CD4-positive, alpha-beta memory T cell (primary cell): ENCODE measurements at regions of chr3 and their contacts with region 1.

Region 1: GRCh38 chr3:120742198-120742849 is at the starts of genes GTF2E1 and RABL3:
- DNase-seq: peak; percentile 96 to 99 (median 97)
- H3K4me3 ChIP-seq: peak within 1 kb of the TSS; percentile 83 to 92
- H3K4me3 Mint-ChIP-seq: peak within 1 kb of the TSS; percentile 89 to 98 (median 96)
- H3K27ac ChIP-seq: peak within 1 kb of the TSS; percentile 98
- H3K27ac Mint-ChIP-seq: peak within 1 kb of the TSS; percentile 96 to 99 (median 98)
- H3K4me1 ChIP-seq: peaks cover 34% of the 10 kb centered on the region
- H3K4me1 Mint-ChIP-seq: peaks cover 21 to 58% (median 39%) of the 10 kb centered on the region in 4 donors
- H3K27me3 ChIP-seq: no peaks in the 10 kb centered on the region
- H3K27me3 Mint-ChIP-seq: no peaks in the 10 kb centered on the region
- total RNA-seq, gene GTF2E1: 30.0 to 30.2 TPM
- total RNA-seq, gene RABL3: 31.9 to 33.0 TPM

Region 2: DNA sequence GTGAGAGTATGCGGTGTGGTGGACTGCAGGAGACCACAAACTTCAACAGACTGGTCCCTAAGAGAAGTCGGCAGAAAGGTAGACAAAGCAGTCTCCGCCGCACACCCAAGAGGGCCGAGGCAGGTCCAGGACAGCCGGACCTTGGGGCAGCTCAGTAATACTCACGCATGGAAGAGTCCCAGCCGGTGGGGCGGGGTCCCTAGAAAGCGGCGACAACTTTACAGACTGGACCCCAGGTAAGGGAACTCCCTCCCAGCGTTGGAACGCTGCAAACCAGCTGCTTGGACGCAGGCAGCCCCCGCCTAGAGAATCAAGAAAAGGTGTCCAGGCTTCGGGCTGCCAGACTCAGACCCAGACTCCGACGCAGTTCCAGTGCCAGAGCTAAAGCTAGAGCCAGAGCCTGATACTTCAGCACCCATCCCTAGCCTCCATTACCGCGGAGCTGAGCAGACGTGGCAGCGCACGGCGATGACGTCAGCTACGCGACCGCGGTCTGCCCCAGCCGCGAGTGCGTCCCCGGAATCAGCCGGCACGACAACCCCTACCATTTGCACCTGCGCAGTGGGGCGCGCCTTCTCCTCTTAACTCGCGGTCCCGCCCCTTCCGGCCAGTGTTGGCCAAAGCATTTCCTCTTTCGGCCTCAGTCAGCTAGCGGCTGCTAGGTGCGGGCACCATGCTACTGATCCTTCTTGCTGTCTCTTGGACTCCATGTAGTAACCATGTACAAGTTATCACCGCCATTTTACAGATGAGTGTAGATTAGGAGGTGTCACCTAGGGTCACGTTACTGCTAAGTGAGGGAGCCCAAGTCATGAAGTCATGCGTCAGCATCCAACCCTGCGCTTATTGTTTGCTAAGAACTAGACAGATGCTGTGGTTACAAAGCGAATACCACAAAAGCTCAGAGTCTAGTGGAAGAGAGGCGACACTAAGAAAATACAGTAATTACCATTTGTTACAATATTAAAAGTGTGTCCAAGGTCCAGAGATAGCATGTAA is 1278.9 kb before region 1 on chr3 and contains the start of gene TMEM39A:
- CTCF ChIA-PET with region 1: no interaction called
- POLR2A ChIA-PET with region 1: no interaction called
- intact Hi-C with region 1: loop called (anchors 1 kb)
- DNase-seq: peak; percentile 98 to 99 (median 99)
- H3K4me3 ChIP-seq: peak within 1 kb of the TSS; percentile 91 to 98
- H3K4me3 Mint-ChIP-seq: peak within 1 kb of the TSS; percentile 93 to 97 (median 95)
- H3K27ac ChIP-seq: peak within 1 kb of the TSS; percentile 91
- H3K27ac Mint-ChIP-seq: peak within 1 kb of the TSS; percentile 98 to 99 (median 99)
- H3K4me1 ChIP-seq: peaks cover 33% of the 10 kb centered on the region
- H3K4me1 Mint-ChIP-seq: peaks cover 24 to 58% (median 38%) of the 10 kb centered on the region in 4 donors
- H3K27me3 ChIP-seq: no peaks in the 10 kb centered on the region
- H3K27me3 Mint-ChIP-seq: peaks cover 0 to 2% of the 10 kb centered on the region in 2 donors
- total RNA-seq, gene TMEM39A: 46.1 to 47.4 TPM

Region 3: DNA sequence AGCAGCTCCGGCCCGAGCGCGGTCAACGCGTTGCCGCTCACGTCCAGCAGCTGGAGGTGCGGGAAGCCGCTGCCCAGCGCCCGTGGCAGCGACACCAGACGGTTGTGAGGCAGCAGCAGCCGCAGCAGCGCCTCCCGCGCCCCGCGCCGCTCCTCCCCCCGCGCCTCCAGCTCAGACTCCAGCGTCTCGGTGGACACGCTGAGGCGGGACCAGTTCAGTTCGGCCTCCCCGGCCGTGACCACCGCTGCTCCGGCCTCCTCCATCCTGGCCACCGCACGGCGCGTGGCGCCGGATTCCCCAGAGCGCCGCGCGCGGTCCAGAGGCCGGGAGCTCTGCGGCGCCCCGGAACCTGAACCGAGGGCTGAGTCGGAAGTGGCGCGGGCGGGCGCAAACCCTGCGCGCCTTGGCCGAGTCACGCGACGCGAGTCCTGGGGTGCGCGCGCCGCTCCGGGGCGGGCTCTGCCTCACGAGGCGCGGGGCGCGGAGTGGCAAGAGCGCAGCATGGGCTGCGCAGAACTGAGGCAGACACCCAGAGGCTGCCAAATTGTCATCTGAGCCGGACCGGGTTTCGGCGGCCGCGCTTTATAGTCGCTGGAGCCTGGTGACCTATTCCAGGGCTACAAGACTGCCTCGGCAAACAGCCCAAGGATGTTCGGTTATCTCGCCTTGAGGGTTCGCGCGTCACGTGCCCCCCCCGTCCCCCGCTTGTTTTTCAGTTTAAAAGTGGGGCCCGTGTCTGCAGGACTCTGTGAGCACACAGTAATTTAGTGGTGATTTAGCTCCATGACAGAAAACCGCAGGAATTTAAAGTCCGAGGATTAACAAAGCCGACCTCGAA is 393.1 kb before region 1 on chr3 and contains the start of gene LRRC58:
- CTCF ChIA-PET with region 1: no interaction called
- POLR2A ChIA-PET with region 1: interaction called, 23 read pairs
- intact Hi-C with region 1: loop called (anchors 1 kb)
- DNase-seq: peak; percentile 86 to 93 (median 93)
- H3K4me3 ChIP-seq: peak within 1 kb of the TSS; percentile 67 to 91
- H3K4me3 Mint-ChIP-seq: peak within 1 kb of the TSS; percentile 88 to 95 (median 93)
- H3K27ac ChIP-seq: peak within 1 kb of the TSS; percentile 77
- H3K27ac Mint-ChIP-seq: peak within 1 kb of the TSS; percentile 87 to 96 (median 92)
- H3K4me1 ChIP-seq: peaks cover 46% of the 10 kb centered on the region
- H3K4me1 Mint-ChIP-seq: peaks cover 36 to 50% (median 43%) of the 10 kb centered on the region in 4 donors
- H3K27me3 ChIP-seq: no peaks in the 10 kb centered on the region
- H3K27me3 Mint-ChIP-seq: peaks cover 2% of the 10 kb centered on the region in 2 donors
- total RNA-seq, gene LRRC58: 23.0 to 23.6 TPM

Region 4: GRCh38 chr3:120567370-120568201 is 174.7 kb before region 1 on chr3:
- CTCF ChIA-PET with region 1: interaction called, 12 read pairs
- POLR2A ChIA-PET with region 1: no interaction called
- intact Hi-C with region 1: no loop called
- DNase-seq: no peak
- H3K4me3 ChIP-seq: no peak overlapping the region
- H3K4me3 Mint-ChIP-seq: peak overlapping the region in 7 of 8 donors; percentile 27 to 81 (median 59)
- H3K27ac ChIP-seq: no peak overlapping the region
- H3K27ac Mint-ChIP-seq: peak overlapping the region in 4 of 7 donors; percentile 10 to 75 (median 39)
- H3K4me1 ChIP-seq: no peaks in the 10 kb centered on the region
- H3K4me1 Mint-ChIP-seq: peaks cover 0 to 3% (median 1%) of the 10 kb centered on the region in 4 donors
- H3K27me3 ChIP-seq: no peaks in the 10 kb centered on the region
- H3K27me3 Mint-ChIP-seq: peaks cover 2 to 9% of the 10 kb centered on the region in 2 donors

Region 5: GRCh38 chr3:120596116-120596852 is 146.0 kb before region 1 on chr3 and contains the start of gene NDUFB4:
- CTCF ChIA-PET with region 1: interaction called, 9 read pairs
- POLR2A ChIA-PET with region 1: interaction called, 66 read pairs
- intact Hi-C with region 1: loop called (anchors 1 kb)
- DNase-seq: peak; percentile 89 to 96 (median 96)
- H3K4me3 ChIP-seq: peak within 1 kb of the TSS; percentile 97 to 99
- H3K4me3 Mint-ChIP-seq: peak within 1 kb of the TSS; percentile 91 to 98 (median 95)
- H3K27ac ChIP-seq: peak within 1 kb of the TSS; percentile 98
- H3K27ac Mint-ChIP-seq: peak within 1 kb of the TSS in 6 of 7 donors; percentile 96 to 99 (median 98)
- H3K4me1 ChIP-seq: peaks cover 30% of the 10 kb centered on the region
- H3K4me1 Mint-ChIP-seq: peaks cover 6 to 8% (median 7%) of the 10 kb centered on the region in 4 donors
- H3K27me3 ChIP-seq: no peaks in the 10 kb centered on the region
- H3K27me3 Mint-ChIP-seq: no peaks in the 10 kb centered on the region
- total RNA-seq, gene NDUFB4: 82.1 to 82.8 TPM

Region 6: GRCh38 chr3:120708408-120708807 is 33.9 kb before region 1 on chr3:
- CTCF ChIA-PET with region 1: interaction called, 3 read pairs
- POLR2A ChIA-PET with region 1: interaction called, 3 read pairs
- intact Hi-C with region 1: loop called (anchors 5 kb)
- DNase-seq: no peak
- H3K4me3 ChIP-seq: no peak overlapping the region
- H3K4me3 Mint-ChIP-seq: no peak overlapping the region
- H3K27ac ChIP-seq: no peak overlapping the region
- H3K27ac Mint-ChIP-seq: peak overlapping the region in 2 of 7 donors; percentile 8 to 13
- H3K4me1 ChIP-seq: no peaks in the 10 kb centered on the region
- H3K4me1 Mint-ChIP-seq: peaks cover 2 to 10% (median 4%) of the 10 kb centered on the region in 4 donors
- H3K27me3 ChIP-seq: no peaks in the 10 kb centered on the region
- H3K27me3 Mint-ChIP-seq: no peaks in the 10 kb centered on the region